ENCODE measurements at regions of chr12 and their contacts with region 1.

Region 1: GRCh38 chr12:82069931-82070514 is 288.2 kb downstream of the CCDC59 start:
- DNase-seq: no peak
- H3K4me3 Mint-ChIP-seq: no peak overlapping the region
- H3K27ac Mint-ChIP-seq: no peak overlapping the region
- H3K4me1 Mint-ChIP-seq: no peaks in the 10 kb centered on the region
- H3K27me3 Mint-ChIP-seq: no peaks in the 10 kb centered on the region
- CTCF ChIP-seq: no peak

Region 2: DNA sequence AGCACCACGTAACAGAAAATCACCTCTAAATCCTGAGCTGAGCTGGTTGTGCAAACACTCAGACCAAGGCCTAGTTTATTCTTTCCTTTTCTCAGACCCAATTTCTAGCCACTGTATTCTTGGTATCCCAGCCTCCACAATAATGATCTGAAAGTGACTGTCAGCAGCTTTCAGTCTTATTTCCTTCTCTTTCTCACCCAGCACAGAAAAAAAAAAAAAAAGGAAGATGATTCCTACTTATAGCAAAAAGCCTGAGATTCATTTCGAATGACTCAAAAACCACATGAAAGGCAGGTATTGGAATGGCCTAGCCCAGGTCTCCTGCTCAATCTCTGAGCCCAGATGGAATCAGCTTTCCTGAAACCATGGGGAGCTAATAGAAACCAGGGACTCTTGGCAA is 12.3 kb before region 1 on chr12:
- CTCF ChIA-PET with region 1: no interaction called
- intact Hi-C with region 1: loop called (anchors 2 kb)
- DNase-seq: peak; percentile 45
- H3K4me3 Mint-ChIP-seq: no peak overlapping the region
- H3K27ac Mint-ChIP-seq: peak overlapping the region; percentile 53
- H3K4me1 Mint-ChIP-seq: peaks cover 27% of the 10 kb centered on the region
- H3K27me3 Mint-ChIP-seq: no peaks in the 10 kb centered on the region
- CTCF ChIP-seq: no peak

Region 3: GRCh38 chr12:82089369-82090060 is 19.5 kb after region 1 on chr12:
- CTCF ChIA-PET with region 1: no interaction called
- intact Hi-C with region 1: no loop called
- DNase-seq: no peak
- H3K4me3 Mint-ChIP-seq: peak overlapping the region; percentile 19
- H3K27ac Mint-ChIP-seq: peak overlapping the region; percentile 72
- H3K4me1 Mint-ChIP-seq: peaks cover 18% of the 10 kb centered on the region
- H3K27me3 Mint-ChIP-seq: no peaks in the 10 kb centered on the region
- CTCF ChIP-seq: no peak

Measured in Calu3 (cell line).